Dendritic cell treated with granulocyte-macrophage colony-stimulating factor and Interleukin-4, amounts not matched to agents 40 ng/mL and 50 ng/mL, for 4 days (primary cell): ENCODE measurements at regions of chr17 and their contacts with region 1.

Region 1: DNA sequence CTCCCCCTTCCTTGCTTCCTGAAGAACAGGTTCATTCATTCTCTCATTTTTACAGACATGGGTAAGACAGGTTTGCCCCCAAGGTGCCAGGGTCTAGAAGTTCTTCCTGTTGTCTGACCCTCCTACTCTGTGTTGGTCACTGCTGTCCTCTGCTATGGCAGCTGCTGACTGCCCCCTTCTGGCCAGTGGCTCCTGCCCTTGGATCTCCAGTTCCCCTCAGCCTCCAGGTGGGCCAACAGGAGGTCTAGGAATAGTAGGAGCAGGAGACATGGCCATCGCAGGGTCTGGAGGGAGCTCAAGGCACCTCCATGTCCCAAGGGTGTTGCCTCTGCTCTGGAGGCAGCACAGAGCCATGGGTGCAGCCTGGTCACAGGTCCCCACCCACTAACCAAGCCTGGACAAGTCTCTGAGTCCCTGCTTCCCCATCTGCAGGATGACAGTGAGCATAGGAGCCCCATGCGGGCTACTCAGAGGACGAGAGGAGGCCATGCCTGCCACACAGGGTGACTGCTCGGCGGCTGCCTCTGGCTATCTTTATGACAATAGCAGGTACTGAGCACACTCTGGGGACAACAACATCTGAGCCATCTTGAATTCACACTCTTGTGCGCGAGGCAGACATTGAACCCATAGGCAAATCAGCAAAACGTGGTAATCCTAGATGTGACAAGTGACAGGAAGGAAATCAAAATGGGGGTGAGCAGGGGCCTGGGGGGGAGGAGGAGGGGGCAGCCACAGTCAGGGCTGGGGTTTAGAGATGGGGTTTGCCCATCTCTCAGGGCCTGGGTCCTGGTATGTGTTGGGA is 27.0 kb upstream of the NXPH3 start:
- H3K4me3 Mint-ChIP-seq: no peak overlapping the region
- H3K27ac Mint-ChIP-seq: peak overlapping the region; percentile 15
- H3K4me1 Mint-ChIP-seq: peaks cover 8% of the 10 kb centered on the region
- H3K27me3 Mint-ChIP-seq: peaks cover 35% of the 10 kb centered on the region

Region 2: GRCh38 chr17:49305926-49306325 is 242.8 kb before region 1 on chr17:
- intact Hi-C with region 1: loop called (anchors 5 kb)
- H3K4me3 Mint-ChIP-seq: no peak overlapping the region
- H3K27ac Mint-ChIP-seq: no peak overlapping the region
- H3K4me1 Mint-ChIP-seq: no peaks in the 10 kb centered on the region
- H3K27me3 Mint-ChIP-seq: no peaks in the 10 kb centered on the region

Region 3: GRCh38 chr17:49434821-49435670 is 113.7 kb before region 1 on chr17:
- intact Hi-C with region 1: loop called (anchors 2 kb)
- H3K4me3 Mint-ChIP-seq: no peak overlapping the region
- H3K27ac Mint-ChIP-seq: no peak overlapping the region
- H3K4me1 Mint-ChIP-seq: peaks cover 16% of the 10 kb centered on the region
- H3K27me3 Mint-ChIP-seq: peaks cover 52% of the 10 kb centered on the region